PC-3 (cell line): ENCODE measurements at regions of chr2 and their contacts with region 1.

Region 1: GRCh38 chr2:189559579-189560272 is 20.9 kb downstream of the SLC40A1 start:
- DNase-seq: no peak
- ATAC-seq: peak; percentile 48; the same call in 1 of the 2 replicates
- H3K4me3 ChIP-seq: no peak overlapping the region
- H3K27ac ChIP-seq: no peak overlapping the region
- H3K4me1 ChIP-seq: peaks cover 25% of the 10 kb centered on the region
- H3K27me3 ChIP-seq: no peaks in the 10 kb centered on the region
- CTCF ChIP-seq: no peak

Region 2: DNA sequence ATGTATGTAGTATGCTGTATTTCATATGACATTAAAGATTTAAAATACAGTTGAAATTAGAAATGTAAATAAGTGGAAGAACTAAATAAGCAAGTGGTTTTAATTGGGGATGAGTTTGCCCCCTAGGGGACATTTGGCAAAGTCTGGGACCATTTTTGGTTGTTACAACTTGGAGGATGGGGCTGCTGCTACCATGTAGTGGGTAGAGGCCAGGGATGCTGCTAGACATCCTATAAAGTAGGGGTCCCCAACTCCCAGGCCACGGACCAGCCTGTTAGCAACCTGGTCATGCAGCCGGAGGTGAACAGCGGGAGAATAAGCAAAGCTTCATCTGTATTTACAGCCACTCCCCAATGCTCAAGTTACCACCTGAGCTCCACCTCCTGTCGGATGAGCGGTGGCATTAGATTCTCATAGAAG is 73.7 kb after region 1 on chr2:
- CTCF ChIA-PET with region 1: no interaction called
- POLR2A ChIA-PET with region 1: no interaction called
- intact Hi-C with region 1: loop called (anchors 5 kb)
- DNase-seq: peak; percentile 49
- ATAC-seq: peak; percentile 50
- H3K4me3 ChIP-seq: no peak overlapping the region
- H3K27ac ChIP-seq: no peak overlapping the region
- H3K4me1 ChIP-seq: no peaks in the 10 kb centered on the region
- H3K27me3 ChIP-seq: no peaks in the 10 kb centered on the region
- CTCF ChIP-seq: peak; percentile 74

Region 3: GRCh38 chr2:190283783-190284182 is 724.1 kb after region 1 on chr2:
- CTCF ChIA-PET with region 1: no interaction called
- POLR2A ChIA-PET with region 1: no interaction called
- intact Hi-C with region 1: no loop called
- DNase-seq: peak; percentile 57
- ATAC-seq: peak; percentile 99
- H3K4me3 ChIP-seq: no peak overlapping the region
- H3K27ac ChIP-seq: no peak overlapping the region
- H3K4me1 ChIP-seq: peaks cover 4% of the 10 kb centered on the region; the same call in 1 of the 2 replicates
- H3K27me3 ChIP-seq: no peaks in the 10 kb centered on the region
- CTCF ChIP-seq: no peak